OCI-LY7 (cell line): ENCODE measurements at regions of chr4 and their contacts with region 1.

Region 1: DNA sequence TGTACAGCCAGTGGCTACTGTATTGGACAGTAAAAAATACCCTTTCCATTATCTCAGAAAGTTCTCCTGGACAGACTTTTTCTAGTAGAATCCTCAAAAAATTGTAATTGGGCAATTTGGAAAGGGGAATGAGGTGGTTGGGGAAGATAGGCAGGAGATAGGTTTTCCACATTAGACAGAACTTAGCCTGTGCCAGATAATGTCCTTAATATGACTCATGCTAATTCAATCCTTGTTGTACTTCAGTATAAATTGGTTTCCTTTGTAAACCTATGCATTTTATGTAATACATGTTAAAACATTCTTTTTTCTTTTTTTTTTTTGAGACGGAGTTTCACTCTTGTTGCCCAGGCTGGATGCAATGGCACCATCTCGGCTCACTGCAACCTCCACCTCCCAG is 8.9 kb downstream of the EIF4E start:
- DNase-seq: no peak
- H3K4me3 ChIP-seq: no peak overlapping the region
- H3K27ac ChIP-seq: no peak overlapping the region
- H3K4me1 ChIP-seq: peaks cover 44% of the 10 kb centered on the region
- CTCF ChIP-seq: no peak

Region 2: GRCh38 chr4:98822144-98822543 is 97.9 kb before region 1 on chr4:
- CTCF ChIA-PET with region 1: no interaction called
- POLR2A ChIA-PET with region 1: no interaction called
- intact Hi-C with region 1: no loop called
- DNase-seq: no peak
- H3K4me3 ChIP-seq: no peak overlapping the region
- H3K27ac ChIP-seq: no peak overlapping the region
- H3K4me1 ChIP-seq: no peaks in the 10 kb centered on the region
- CTCF ChIP-seq: no peak

Region 3: GRCh38 chr4:98903963-98904362 is 16.0 kb before region 1 on chr4:
- CTCF ChIA-PET with region 1: interaction called, 3 read pairs
- POLR2A ChIA-PET with region 1: interaction called, 17 read pairs
- intact Hi-C with region 1: no loop called
- DNase-seq: no peak
- H3K4me3 ChIP-seq: no peak overlapping the region
- H3K27ac ChIP-seq: no peak overlapping the region
- H3K4me1 ChIP-seq: peaks cover 6% of the 10 kb centered on the region
- CTCF ChIP-seq: no peak

Region 4: DNA sequence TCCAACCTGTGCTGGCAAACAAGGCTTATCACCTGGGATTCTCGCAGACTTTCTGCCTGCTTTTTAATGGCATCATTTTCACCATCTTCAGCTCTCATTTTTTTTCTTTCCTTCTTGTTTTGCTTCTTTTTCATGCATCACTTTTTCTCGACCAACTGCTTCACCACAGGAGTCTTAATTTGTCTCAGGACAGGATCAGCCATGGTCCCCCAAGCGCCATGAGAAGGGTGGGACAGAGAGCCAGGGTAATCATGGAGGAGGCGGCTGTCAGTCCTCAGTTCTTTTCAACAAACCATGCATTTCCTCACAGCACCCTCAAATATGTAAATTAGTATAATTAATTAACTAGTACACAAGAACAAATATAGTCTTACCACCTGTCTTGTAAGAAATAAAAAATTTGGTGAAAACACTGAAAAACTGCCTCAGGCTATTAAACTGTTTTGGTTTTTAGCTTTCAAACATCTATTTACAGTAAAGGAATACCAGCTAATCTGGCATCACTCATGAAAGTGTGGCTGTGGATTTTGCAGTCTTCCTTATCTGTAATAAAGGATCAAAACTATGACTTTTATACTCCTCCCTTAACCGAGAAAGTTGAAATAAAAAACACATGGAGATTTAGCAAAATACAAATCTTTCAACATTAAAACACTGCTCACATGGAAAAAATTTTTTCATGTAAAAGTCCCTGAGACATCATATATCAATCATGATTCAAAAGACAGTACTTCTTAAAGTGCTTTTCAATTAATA is 10.2 kb before region 1 on chr4:
- CTCF ChIA-PET with region 1: interaction called, 4 read pairs
- POLR2A ChIA-PET with region 1: interaction called, 36 read pairs
- intact Hi-C with region 1: no loop called
- DNase-seq: no peak
- H3K4me3 ChIP-seq: no peak overlapping the region
- H3K27ac ChIP-seq: no peak overlapping the region
- H3K4me1 ChIP-seq: peaks cover 28% of the 10 kb centered on the region
- CTCF ChIP-seq: no peak